ENCODE measurements at regions of chr6 and their contacts with region 1.

Region 1: GRCh38 chr6:20401205-20402091 is at the start of gene E2F3:
- DNase-seq: peak; percentile 98
- H3K4me3 ChIP-seq: peak within 1 kb of the TSS; percentile 61 to 95 (median 84)
- H3K27ac ChIP-seq: peak within 1 kb of the TSS; percentile 67 to 98 (median 92)
- H3K4me1 ChIP-seq: peaks cover 0 to 51% (median 28%) of the 10 kb centered on the region in 6 donors
- H3K27me3 ChIP-seq: no peaks in the 10 kb centered on the region
- CTCF ChIP-seq: no peak
- POLR2A ChIP-seq: no peak
- total RNA-seq, gene E2F3: 13.2 to 22.9 (median 16.4) TPM

Region 2: DNA sequence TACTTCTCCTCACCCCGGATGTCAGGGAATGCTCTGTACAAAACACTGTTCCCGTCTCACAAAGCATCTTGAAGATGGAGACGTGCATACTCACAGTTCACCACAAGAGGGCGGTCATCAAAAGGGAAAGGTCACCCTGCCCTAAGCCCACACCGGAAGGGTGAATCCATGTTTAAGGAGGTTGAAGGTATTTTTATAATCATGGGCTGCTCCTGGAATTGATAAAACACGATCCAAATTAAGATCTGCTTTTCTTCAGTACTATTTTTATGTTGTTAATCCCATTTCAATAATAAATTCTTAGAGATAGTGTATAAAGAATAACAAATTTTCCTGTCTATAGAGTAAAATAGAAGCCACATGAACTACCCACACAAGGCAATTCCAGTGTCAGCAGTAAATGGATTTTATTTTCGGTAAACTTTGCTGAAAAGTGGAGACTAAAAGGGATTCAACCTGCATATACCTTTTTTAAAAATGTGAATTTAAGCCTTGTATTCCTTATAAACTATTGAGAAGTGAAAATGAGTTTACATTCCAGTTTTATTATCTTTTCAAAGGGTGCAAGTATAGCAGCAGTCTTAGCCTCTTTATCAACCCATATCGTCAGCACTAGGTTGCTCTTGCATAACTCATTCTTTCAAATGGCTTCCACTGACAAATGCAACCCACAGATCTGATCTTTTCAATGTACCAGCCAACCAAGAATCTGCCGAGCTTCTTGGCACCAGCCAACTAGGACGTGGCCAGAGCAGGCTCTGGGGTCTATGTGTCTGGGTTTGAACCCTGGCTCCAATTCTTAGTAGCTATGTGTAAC is 109.5 kb before region 1 on chr6:
- intact Hi-C with region 1: loop called (anchors 10 kb)
- DNase-seq: peak; percentile 76
- H3K4me3 ChIP-seq: no peak overlapping the region
- H3K27ac ChIP-seq: no peak overlapping the region
- H3K4me1 ChIP-seq: peaks cover 0 to 18% (median 8%) of the 10 kb centered on the region in 6 donors
- H3K27me3 ChIP-seq: no peaks in the 10 kb centered on the region
- CTCF ChIP-seq: peak; percentile 74 to 92 (median 89)
- POLR2A ChIP-seq: no peak

Region 3: GRCh38 chr6:20350215-20350614 is 51.2 kb before region 1 on chr6:
- intact Hi-C with region 1: no loop called
- DNase-seq: no peak
- H3K4me3 ChIP-seq: no peak overlapping the region
- H3K27ac ChIP-seq: no peak overlapping the region
- H3K4me1 ChIP-seq: no peaks in the 10 kb centered on the region
- H3K27me3 ChIP-seq: no peaks in the 10 kb centered on the region
- CTCF ChIP-seq: no peak
- POLR2A ChIP-seq: no peak